ENCODE measurements at regions of chr14 and their contacts with region 1.

Region 1: GRCh38 chr14:94180655-94181271 is 6.6 kb downstream of the PPP4R4 start:
- DNase-seq: peak; percentile 34
- ATAC-seq: peak; percentile 77
- H3K4me3 Mint-ChIP-seq: peak overlapping the region; percentile 81
- H3K27ac Mint-ChIP-seq: peak overlapping the region; percentile 55
- H3K4me1 Mint-ChIP-seq: peaks cover 52% of the 10 kb centered on the region
- H3K27me3 Mint-ChIP-seq: peaks cover 2% of the 10 kb centered on the region

Region 2: GRCh38 chr14:94026173-94026888 is 154.4 kb before region 1 on chr14 and contains the start of gene OTUB2:
- CTCF ChIA-PET with region 1: no interaction called
- POLR2A ChIA-PET with region 1: no interaction called
- intact Hi-C with region 1: loop called in 1 of 2 experiments (anchors 2 kb)
- DNase-seq: peak; percentile 98
- ATAC-seq: peak; percentile 99
- H3K4me3 Mint-ChIP-seq: peak within 1 kb of the TSS; percentile 54
- H3K27ac Mint-ChIP-seq: no peak within 1 kb of the TSS
- H3K4me1 Mint-ChIP-seq: peaks cover 32% of the 10 kb centered on the region
- H3K27me3 Mint-ChIP-seq: no peaks in the 10 kb centered on the region
- total RNA-seq, gene OTUB2: 0.75 to 0.93 TPM

Region 3: DNA sequence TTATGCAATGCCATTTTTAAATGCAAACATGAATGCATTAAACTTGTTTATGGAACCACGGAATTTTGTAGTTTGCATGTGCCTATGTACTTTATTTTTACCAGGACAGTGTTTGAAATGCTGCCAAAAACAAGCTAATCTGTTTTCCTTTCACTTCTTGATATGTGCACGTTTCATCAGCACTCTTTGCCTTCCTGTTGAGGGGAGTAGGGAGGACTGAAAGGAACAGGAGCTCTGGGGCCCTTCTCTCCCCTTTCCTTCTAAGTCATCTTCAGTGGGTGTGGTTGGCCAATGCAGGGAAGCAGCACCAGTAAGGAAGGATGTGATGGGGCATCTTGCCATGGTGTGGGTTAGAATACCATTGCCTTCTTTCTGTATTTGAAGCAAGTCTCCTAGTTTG is 18.8 kb before region 1 on chr14:
- CTCF ChIA-PET with region 1: interaction called, 12 read pairs
- POLR2A ChIA-PET with region 1: no interaction called
- intact Hi-C with region 1: no loop called
- DNase-seq: peak; percentile 24
- ATAC-seq: no peak
- H3K4me3 Mint-ChIP-seq: no peak overlapping the region
- H3K27ac Mint-ChIP-seq: peak overlapping the region; percentile 65
- H3K4me1 Mint-ChIP-seq: peaks cover 73% of the 10 kb centered on the region
- H3K27me3 Mint-ChIP-seq: no peaks in the 10 kb centered on the region

Region 4: GRCh38 chr14:94193776-94194175 is 13.0 kb after region 1 on chr14:
- CTCF ChIA-PET with region 1: interaction called, 15 read pairs
- POLR2A ChIA-PET with region 1: no interaction called
- intact Hi-C with region 1: no loop called
- DNase-seq: no peak
- ATAC-seq: no peak
- H3K4me3 Mint-ChIP-seq: no peak overlapping the region
- H3K27ac Mint-ChIP-seq: no peak overlapping the region
- H3K4me1 Mint-ChIP-seq: peaks cover 6% of the 10 kb centered on the region
- H3K27me3 Mint-ChIP-seq: peaks cover 7% of the 10 kb centered on the region